Activated B cell treated with CpG ODN at 0.5 μM for 24 hours (primary cell): ENCODE measurements at regions of chr19 and their contacts with region 1.

Region 1: GRCh38 chr19:18000935-18001778 is 6.8 kb upstream of the ARRDC2 start:
- DNase-seq: peak; percentile 92
- ATAC-seq: peak; percentile 82
- H3K4me3 Mint-ChIP-seq: peak overlapping the region; percentile 92
- H3K27ac Mint-ChIP-seq: peak overlapping the region; percentile 96
- H3K4me1 Mint-ChIP-seq: peaks cover 37% of the 10 kb centered on the region
- H3K27me3 Mint-ChIP-seq: no peaks in the 10 kb centered on the region
- CTCF ChIP-seq: no peak

Region 2: GRCh38 chr19:17873786-17874757 is 127.1 kb before region 1 on chr19:
- CTCF ChIA-PET with region 1: no interaction called
- POLR2A ChIA-PET with region 1: interaction called, 8 read pairs
- intact Hi-C with region 1: loop called (anchors 5 kb)
- DNase-seq: peak; percentile 50
- ATAC-seq: peak; percentile 90
- H3K4me3 Mint-ChIP-seq: peak overlapping the region; percentile 59
- H3K27ac Mint-ChIP-seq: no peak overlapping the region
- H3K4me1 Mint-ChIP-seq: peaks cover 21% of the 10 kb centered on the region
- H3K27me3 Mint-ChIP-seq: peaks cover 2% of the 10 kb centered on the region
- CTCF ChIP-seq: no peak

Region 3: GRCh38 chr19:17947815-17948513 is 53.2 kb before region 1 on chr19:
- CTCF ChIA-PET with region 1: interaction called, 227 read pairs
- POLR2A ChIA-PET with region 1: interaction called, 45 read pairs
- intact Hi-C with region 1: loop called (anchors 1 kb)
- DNase-seq: peak; percentile 98
- ATAC-seq: peak; percentile 63
- H3K4me3 Mint-ChIP-seq: peak overlapping the region; percentile 74
- H3K27ac Mint-ChIP-seq: no peak overlapping the region
- H3K4me1 Mint-ChIP-seq: peaks cover 59% of the 10 kb centered on the region
- H3K27me3 Mint-ChIP-seq: peaks cover 12% of the 10 kb centered on the region
- CTCF ChIP-seq: no peak

Region 4: GRCh38 chr19:18058208-18059030 is 57.3 kb after region 1 on chr19:
- CTCF ChIA-PET with region 1: interaction called, 91 read pairs
- POLR2A ChIA-PET with region 1: interaction called, 190 read pairs
- intact Hi-C with region 1: loop called (anchors 1 kb)
- DNase-seq: peak; percentile 81
- ATAC-seq: peak; percentile 93
- H3K4me3 Mint-ChIP-seq: peak overlapping the region; percentile 58
- H3K27ac Mint-ChIP-seq: peak overlapping the region; percentile 76
- H3K4me1 Mint-ChIP-seq: peaks cover 21% of the 10 kb centered on the region
- H3K27me3 Mint-ChIP-seq: no peaks in the 10 kb centered on the region
- CTCF ChIP-seq: peak; percentile 88

Region 5: GRCh38 chr19:18109733-18110595 is 108.8 kb after region 1 on chr19:
- CTCF ChIA-PET with region 1: no interaction called
- POLR2A ChIA-PET with region 1: interaction called, 11 read pairs
- intact Hi-C with region 1: no loop called
- DNase-seq: peak; percentile 62
- ATAC-seq: peak; percentile 57
- H3K4me3 Mint-ChIP-seq: peak overlapping the region; percentile 80
- H3K27ac Mint-ChIP-seq: peak overlapping the region; percentile 83
- H3K4me1 Mint-ChIP-seq: peaks cover 54% of the 10 kb centered on the region
- H3K27me3 Mint-ChIP-seq: no peaks in the 10 kb centered on the region
- CTCF ChIP-seq: no peak